ENCODE measurements at regions of chr7 and their contacts with region 1.

Region 1: DNA sequence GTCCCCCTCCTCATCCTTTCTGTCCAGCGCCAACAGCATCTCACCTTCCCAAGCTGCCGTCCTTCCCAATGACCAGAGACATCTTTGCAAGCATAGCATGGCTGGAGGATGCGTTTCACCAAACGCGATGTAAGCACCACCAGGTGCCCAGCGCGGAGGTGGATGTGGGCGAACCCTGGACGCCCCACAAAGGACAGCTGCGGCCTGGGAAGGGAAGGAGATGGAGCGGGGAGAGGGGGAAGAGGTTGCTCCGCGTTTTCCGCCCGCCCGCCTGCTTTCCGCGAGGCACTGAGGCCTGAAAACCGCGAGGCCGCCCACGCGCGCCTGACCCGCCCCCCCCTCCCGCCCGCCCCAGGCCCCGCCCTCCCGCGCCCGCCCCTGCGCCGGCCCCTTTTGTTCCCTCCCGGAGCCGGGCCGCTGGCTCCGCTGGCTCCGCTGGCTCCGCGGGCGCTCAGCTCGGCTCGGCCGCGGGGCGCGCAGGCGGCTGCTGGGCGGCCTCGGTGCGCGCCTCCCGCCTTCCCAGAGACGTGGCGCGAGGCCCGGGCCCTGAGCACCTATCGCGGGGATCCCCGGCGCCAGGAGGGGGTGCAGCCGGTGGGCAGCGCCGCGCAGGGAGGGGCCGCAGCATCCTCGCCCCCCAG is at the start of gene CLIP2:
- DNase-seq: peak; percentile 77
- ATAC-seq: peak; percentile 74
- H3K4me3 Mint-ChIP-seq: peak within 1 kb of the TSS; percentile 85
- H3K27ac Mint-ChIP-seq: peak within 1 kb of the TSS; percentile 84; the same call in 1 of the 2 replicates
- H3K4me1 Mint-ChIP-seq: peaks cover 55% of the 10 kb centered on the region
- H3K27me3 Mint-ChIP-seq: peaks cover 5% of the 10 kb centered on the region
- CTCF ChIP-seq: no peak
- total RNA-seq, gene CLIP2: 48.1 to 49.7 TPM (median 48.4 TPM) in 3 replicates

Region 2: GRCh38 chr7:74272305-74273038 is 16.7 kb before region 1 on chr7:
- CTCF ChIA-PET with region 1: interaction called, 108 read pairs
- POLR2A ChIA-PET with region 1: interaction called, 5 read pairs
- DNase-seq: peak; percentile 62
- ATAC-seq: peak; percentile 62
- H3K4me3 Mint-ChIP-seq: no peak overlapping the region
- H3K27ac Mint-ChIP-seq: peak overlapping the region; percentile 95
- H3K4me1 Mint-ChIP-seq: peaks cover 26% of the 10 kb centered on the region
- H3K27me3 Mint-ChIP-seq: no peaks in the 10 kb centered on the region
- CTCF ChIP-seq: no peak